GM10248 (cell line): ENCODE measurements at regions of chr16 and their contacts with region 1.

Region 1: DNA sequence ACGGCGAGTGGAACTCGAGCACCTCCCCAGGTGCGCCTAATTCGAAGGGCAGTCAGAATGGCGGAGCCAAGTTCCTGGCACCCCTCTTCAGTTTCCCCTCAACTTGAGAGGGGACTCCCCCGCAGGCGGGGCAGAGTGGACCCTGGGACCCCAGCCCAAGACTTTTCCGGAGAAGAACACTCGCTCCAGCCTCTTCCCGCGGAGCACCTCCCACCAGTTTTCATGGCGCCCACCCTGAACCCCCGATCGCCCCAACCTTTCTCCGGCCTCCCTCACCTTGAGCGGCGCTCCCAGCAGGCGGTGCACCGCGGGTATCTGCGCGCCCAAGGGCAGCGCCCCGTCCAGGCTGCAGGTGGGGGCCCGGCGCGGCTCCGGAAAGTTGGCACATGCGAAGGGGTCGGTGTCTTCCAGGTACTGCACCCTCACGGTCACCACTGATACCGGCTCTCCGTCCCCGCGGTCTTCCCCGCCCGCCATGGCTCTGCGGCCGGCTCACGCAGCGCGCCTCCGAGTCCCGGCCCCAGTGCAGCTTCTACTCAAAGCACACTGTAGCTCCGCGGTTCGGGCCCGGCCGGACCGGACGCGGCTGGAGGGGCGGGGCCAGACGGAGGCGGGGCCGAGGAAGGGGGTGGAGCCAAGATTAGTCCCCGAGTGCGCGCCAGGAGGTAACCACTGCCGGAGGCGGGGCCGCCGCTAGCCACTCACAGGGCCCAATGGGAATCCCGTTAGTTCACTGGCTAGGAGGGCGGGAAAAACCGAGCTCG is at the start of gene FHOD1:
- DNase-seq: peak; percentile 97
- CTCF ChIP-seq: no peak

Region 2: DNA sequence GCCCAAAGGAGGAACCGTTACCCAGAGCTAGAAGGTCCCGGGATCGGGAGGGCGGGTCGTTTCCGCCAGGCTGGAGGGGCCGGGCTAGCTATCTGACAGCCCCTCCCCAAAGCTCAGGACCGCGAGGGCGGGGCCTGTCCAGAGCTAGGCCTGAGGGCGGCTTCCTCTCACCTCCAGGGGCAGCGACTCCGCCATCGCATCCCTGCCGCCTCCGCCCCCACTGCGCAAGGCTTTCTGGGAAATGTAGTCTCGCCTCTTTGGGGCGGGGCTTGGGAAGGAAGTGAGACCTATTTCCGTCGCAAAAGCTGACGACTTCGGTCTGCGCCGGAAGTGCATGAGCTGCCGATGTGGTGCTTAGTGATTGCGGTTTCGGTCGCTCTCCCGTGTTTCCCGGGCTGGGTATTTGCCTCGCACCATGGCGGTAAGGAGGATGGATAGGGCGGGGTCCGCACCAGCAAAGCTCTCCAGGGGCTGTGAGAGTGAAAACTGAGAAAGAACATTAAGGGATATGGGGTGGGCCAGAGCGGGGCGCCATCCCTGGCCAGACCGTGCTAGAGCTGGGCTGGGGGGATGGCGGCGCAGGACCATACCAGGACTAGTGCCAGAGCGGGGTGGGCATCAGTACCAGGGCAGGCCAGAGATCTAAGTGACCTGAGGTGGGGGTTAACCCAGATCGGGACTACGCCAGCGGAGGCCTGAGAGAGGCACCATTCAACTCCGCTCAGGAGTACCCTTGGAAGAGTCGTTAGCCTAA is 20.1 kb before region 1 on chr16 and contains the start of gene TMEM208:
- CTCF ChIA-PET with region 1: interaction called, 32 read pairs
- POLR2A ChIA-PET with region 1: interaction called, 11 read pairs
- DNase-seq: peak; percentile 99
- CTCF ChIP-seq: peak; percentile 13

Region 3: DNA sequence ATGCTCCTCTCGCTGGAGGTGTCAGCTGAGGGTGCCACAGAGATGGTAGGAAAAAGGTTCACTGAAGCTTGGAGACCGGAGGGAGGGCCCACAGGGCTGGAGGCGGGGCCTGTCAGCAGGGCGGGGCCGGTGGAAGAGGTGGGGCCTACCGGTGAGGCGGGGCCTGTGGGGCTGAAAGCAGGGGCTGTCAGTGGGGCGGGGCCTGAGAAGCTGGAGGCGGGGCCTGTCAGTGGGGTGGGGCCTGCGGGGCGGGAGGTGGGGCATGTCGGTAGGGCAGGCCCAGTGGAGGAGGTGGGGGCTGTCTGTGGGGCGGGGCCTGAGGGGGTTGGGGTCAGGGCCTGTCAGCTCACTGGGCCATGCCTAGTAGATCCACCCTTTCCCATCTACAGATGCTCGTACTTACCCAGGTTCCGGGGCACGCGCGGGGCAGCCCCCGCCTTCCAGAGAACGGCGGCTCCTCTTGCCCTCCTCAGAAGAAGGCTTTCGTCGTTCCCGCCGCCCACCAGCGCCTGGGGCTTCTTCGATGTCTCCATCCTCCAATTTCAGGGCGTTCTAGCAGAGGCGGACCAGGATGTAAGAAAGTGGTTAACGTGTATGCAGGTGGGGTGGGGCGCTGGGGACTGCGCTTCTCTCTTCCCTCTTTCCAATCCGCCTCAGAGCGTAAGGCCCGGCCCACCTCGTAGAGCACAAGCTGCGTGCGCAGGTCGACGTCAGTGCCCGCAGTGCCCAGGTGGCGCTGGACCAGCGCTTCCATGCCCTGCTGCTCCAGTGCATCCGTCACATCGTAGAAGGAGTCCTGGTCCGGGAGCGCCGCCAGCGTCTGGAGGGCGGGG is 10.3 kb before region 1 on chr16:
- CTCF ChIA-PET with region 1: interaction called, 32 read pairs
- POLR2A ChIA-PET with region 1: interaction called, 9 read pairs
- DNase-seq: peak; percentile 79
- CTCF ChIP-seq: no peak